ENCODE measurements at regions of chr11 and their contacts with region 1.

Region 1: DNA sequence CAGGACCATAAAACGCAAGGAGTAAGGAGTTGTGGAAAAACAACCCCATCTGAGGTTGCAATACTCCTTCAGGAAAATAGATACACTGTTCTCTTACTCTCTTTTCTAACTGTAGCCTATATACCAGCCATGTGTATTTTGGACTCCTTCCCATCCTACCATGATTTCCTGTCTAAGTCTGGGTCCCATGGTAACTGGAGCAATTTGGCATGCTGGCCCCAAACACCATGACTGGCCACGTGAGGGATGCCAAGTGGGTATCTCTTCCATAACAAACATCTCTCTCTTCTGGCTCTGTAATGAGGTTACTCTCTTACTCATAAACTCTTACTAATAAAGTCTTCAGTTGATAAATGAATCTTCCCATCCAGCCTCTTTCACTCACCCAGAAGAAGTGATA is 26.5 kb downstream of the ABTB2 start:
- DNase-seq: no peak
- H3K4me3 Mint-ChIP-seq: no peak overlapping the region
- H3K27ac Mint-ChIP-seq: peak overlapping the region; percentile 81
- H3K4me1 Mint-ChIP-seq: peaks cover 61% of the 10 kb centered on the region
- H3K27me3 Mint-ChIP-seq: no peaks in the 10 kb centered on the region
- CTCF ChIP-seq: no peak

Region 2: DNA sequence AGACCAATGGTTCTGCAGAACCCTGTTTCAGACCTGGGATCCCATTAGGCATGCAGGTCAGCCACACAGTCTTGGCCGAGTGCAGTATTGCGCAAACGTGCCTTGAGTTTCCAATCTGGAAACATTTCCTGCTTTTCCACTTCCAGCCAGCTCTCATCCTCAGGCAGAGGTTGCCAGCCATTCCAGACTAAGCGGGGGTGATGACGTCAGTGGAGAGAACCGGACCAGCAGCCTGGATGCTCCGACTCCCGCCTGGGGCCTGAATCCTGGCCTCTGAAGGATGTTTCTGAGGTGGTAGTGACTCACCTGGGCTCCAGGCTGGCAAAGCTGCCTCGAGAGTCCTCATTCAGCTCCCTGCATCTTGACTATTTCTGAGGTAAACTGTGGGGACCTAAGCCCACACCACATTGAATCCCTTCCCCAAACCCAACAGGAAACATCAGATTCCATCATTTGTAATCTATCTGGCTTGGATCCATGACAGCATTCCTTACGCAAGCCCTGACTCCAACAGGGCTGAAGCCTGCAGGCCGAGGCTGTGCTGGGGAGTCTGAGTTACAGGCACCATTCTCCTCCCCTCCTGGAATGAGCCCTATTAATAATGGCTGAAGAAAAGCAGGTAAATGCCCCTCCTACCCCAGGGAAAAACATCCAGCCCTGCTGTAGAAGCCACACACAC is 56.5 kb before region 1 on chr11:
- CTCF ChIA-PET with region 1: no interaction called
- intact Hi-C with region 1: loop called (anchors 5 kb)
- DNase-seq: peak; percentile 96
- H3K4me3 Mint-ChIP-seq: peak overlapping the region; percentile 18
- H3K27ac Mint-ChIP-seq: peak overlapping the region; percentile 89
- H3K4me1 Mint-ChIP-seq: peaks cover 24% of the 10 kb centered on the region
- H3K27me3 Mint-ChIP-seq: no peaks in the 10 kb centered on the region
- CTCF ChIP-seq: no peak

Region 3: GRCh38 chr11:34480314-34480713 is 149.0 kb after region 1 on chr11:
- CTCF ChIA-PET with region 1: no interaction called
- intact Hi-C with region 1: no loop called
- DNase-seq: no peak
- H3K4me3 Mint-ChIP-seq: no peak overlapping the region
- H3K27ac Mint-ChIP-seq: no peak overlapping the region
- H3K4me1 Mint-ChIP-seq: peaks cover 8% of the 10 kb centered on the region
- H3K27me3 Mint-ChIP-seq: no peaks in the 10 kb centered on the region
- CTCF ChIP-seq: no peak